ENCODE measurements at regions of chr7 and their contacts with region 1.

Region 1: DNA sequence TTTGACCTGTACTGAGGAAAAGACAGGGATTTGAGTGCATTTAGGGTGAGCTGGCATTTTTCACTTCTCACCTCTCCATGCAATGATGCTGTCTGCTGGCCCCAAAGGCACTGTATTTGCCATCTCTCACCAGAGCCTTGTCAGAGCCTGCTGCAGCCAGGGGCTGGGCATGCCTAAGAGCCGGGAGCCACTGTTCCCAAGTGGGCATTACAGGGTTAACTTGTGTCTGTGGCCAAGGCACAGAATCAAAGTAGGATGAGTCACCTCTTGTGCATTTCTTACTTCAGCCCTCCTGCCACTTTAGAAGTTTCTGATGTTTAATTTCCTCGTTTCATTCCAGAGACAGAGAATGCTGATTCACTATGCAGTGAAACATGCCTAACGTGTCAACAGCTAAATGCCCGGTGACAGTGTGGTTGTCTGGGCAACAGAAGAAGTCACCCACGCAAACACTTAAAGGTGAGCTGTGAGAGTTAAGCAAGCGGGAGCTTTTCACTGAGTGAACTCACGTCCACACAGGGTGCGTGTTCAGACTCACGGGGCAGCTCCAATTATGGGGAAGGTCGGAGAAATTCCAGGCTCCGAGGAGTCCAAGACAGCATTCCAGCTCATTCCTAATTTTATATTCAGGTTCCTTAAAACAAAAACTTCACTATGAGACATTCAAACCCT is 57.1 kb upstream of the IGFBP3 start:
- DNase-seq: peak; percentile 71
- H3K4me3 ChIP-seq: peak overlapping the region in 1 of 3 experiments; percentile 40
- H3K27ac ChIP-seq: peak overlapping the region; percentile 67
- H3K4me1 ChIP-seq: peaks cover 12% of the 10 kb centered on the region
- H3K27me3 ChIP-seq: no peaks in the 10 kb centered on the region
- CTCF ChIP-seq: no peak
- POLR2A ChIP-seq: no peak

Region 2: DNA sequence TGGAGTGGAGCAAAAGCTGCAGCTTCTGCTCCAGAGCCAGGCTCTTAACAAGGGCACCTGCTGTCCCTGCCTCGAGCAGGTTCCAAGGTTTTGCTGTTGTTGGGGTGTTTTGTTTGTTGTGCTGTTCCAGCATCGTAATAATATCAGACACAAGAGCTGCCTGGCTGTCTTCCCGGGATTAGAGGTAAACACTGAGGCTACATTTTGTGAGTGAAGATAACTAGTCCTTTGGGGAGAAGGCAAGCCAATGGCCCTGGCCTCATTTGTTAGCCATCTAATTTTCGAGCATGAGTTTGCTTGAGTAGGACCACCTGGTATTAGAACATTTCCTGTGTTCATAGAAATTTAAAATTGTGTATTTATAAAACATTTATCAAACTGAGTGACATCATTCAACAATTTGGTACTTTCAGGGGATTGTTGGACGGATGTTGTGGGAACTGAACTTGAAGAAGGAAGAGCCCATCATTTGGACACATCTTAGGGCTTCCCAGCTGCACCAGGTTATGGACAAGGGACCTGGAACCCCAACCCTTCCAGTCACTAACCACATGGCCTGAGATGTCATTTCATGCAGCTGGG is 1048.7 kb after region 1 on chr7:
- CTCF ChIA-PET with region 1: no interaction called
- POLR2A ChIA-PET with region 1: no interaction called
- dilution Hi-C with region 1: no loop called
- intact Hi-C with region 1: loop called (anchors 5 kb)
- DNase-seq: no peak
- H3K4me3 ChIP-seq: no peak overlapping the region
- H3K27ac ChIP-seq: no peak overlapping the region
- H3K4me1 ChIP-seq: no peaks in the 10 kb centered on the region
- H3K27me3 ChIP-seq: no peaks in the 10 kb centered on the region
- CTCF ChIP-seq: no peak
- POLR2A ChIP-seq: no peak